ENCODE measurements at regions of chr14 and their contacts with region 1.

Region 1: DNA sequence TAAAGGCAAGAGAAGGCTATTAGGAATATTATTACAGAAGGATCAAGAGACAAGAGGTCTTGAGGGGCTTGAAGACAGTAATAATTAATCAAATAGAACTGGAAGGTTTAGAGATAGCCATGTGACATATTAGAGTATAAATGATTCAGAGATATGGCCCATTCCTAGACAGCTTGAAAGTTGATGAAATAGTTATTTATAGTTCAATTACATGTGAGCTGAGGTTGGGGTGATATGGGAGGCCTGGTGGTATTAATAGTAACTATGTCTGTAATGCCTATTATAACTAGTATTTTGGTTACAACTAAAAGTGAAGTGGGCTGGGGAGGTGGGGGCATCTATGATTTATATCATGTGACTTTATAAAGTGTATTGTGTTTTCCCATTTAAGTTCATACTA is 14.1 kb upstream of the MIS18BP1 start:
- DNase-seq: no peak
- ATAC-seq: no peak
- H3K4me3 ChIP-seq: no peak overlapping the region
- H3K27ac ChIP-seq: no peak overlapping the region
- H3K4me1 ChIP-seq: no peaks in the 10 kb centered on the region
- H3K27me3 ChIP-seq: no peaks in the 10 kb centered on the region
- CTCF ChIP-seq: no peak

Region 2: DNA sequence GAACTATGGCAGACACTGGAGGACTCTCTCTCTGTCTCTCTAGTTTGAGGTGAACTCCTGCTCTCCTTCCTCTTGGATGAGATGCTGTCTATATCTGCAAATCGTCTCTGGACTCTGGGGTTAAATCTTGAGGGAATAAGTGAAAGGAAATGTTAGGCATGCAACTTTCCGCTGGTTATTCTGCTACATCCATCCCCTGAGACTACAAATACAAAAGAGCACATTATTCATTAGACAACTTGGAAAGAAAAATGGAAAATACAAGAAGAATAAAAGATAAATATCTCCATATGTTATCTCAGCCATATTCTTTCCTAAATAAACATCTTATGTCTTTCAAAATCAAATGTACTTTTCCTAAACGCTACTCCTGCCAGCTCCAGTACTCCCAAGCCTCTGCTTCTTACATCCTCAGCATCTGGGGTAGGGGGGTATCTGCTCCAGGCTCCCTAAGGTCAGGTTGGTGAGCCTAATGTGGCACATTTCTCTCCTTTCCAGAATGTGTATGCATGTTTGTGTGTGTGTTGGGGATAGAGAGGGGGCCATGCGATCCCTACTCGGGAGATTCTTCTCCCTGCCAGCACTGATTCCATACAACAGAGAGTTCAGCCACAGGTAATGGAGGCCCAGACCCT is 657.1 kb before region 1 on chr14:
- CTCF ChIA-PET with region 1: no interaction called
- POLR2A ChIA-PET with region 1: no interaction called
- intact Hi-C with region 1: no loop called
- DNase-seq: no peak
- ATAC-seq: no peak
- H3K4me3 ChIP-seq: no peak overlapping the region
- H3K27ac ChIP-seq: no peak overlapping the region
- H3K4me1 ChIP-seq: peaks cover 9% of the 10 kb centered on the region; the same call in 1 of the 2 replicates
- H3K27me3 ChIP-seq: no peaks in the 10 kb centered on the region
- CTCF ChIP-seq: no peak

Region 3: DNA sequence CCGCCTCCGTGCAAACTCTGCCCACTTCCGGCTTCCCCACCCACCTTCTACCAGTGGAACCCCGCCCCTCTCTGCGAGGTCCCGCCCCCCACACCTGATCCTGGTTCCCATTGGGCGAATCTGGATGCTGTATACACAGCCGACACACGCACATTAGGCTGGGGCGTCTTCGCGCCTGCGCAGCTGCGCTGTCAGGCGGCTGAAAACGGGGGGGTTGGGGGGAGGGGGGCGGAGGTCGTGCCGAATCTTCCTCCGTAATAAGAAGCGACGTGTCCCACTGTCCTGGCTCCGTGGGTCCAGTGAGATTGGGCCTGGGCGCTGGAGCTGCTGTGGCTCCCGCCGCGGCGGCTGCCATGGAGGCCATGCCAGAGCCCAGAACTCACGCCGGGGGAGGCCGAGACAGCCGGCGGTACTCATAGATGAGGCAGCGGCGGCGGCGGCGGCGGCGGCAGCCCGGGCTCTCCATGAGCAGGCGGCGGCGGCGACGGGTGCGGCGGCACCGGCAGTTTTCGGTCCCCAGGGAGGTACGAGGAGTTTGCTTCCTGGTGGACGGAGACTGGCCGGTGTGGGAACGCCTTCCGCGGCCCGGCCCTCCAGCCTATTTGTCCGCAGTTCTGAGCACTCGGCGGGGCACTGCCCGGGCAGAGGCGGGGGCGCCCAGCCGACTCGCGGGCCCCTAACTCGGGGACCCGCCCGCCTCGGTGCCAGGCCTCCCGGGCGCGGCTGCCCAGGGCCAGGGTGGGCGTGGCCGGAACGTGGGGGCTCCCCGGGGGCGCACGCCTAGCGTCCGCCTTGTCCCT is 369.8 kb before region 1 on chr14:
- CTCF ChIA-PET with region 1: interaction called, 12 read pairs
- POLR2A ChIA-PET with region 1: no interaction called
- intact Hi-C with region 1: no loop called
- DNase-seq: peak; percentile 98
- ATAC-seq: peak; percentile 93
- H3K4me3 ChIP-seq: peak overlapping the region; percentile 81
- H3K27ac ChIP-seq: peak overlapping the region; percentile 68
- H3K4me1 ChIP-seq: peaks cover 16% of the 10 kb centered on the region
- H3K27me3 ChIP-seq: no peaks in the 10 kb centered on the region
- CTCF ChIP-seq: no peak

Region 4: GRCh38 chr14:45156060-45156459 is 111.0 kb before region 1 on chr14:
- CTCF ChIA-PET with region 1: no interaction called
- POLR2A ChIA-PET with region 1: no interaction called
- intact Hi-C with region 1: loop called (anchors 5 kb)
- DNase-seq: no peak
- ATAC-seq: 0 out of 2 replicates have a peak, but pooled peaks have one; percentile 35
- H3K4me3 ChIP-seq: no peak overlapping the region
- H3K27ac ChIP-seq: no peak overlapping the region
- H3K4me1 ChIP-seq: no peaks in the 10 kb centered on the region
- H3K27me3 ChIP-seq: no peaks in the 10 kb centered on the region
- CTCF ChIP-seq: no peak

Region 5: GRCh38 chr14:45177076-45177475 is 90.0 kb before region 1 on chr14:
- CTCF ChIA-PET with region 1: no interaction called
- POLR2A ChIA-PET with region 1: no interaction called
- intact Hi-C with region 1: no loop called
- DNase-seq: peak; percentile 76
- ATAC-seq: peak; percentile 11; the same call in 1 of the 2 replicates
- H3K4me3 ChIP-seq: no peak overlapping the region
- H3K27ac ChIP-seq: 0 out of 2 replicates have a peak overlapping the region, but pooled peaks have one; percentile 11
- H3K4me1 ChIP-seq: peaks cover 19% of the 10 kb centered on the region
- H3K27me3 ChIP-seq: no peaks in the 10 kb centered on the region
- CTCF ChIP-seq: no peak

Region 6: GRCh38 chr14:45201905-45202304 is 65.2 kb before region 1 on chr14:
- CTCF ChIA-PET with region 1: no interaction called
- POLR2A ChIA-PET with region 1: no interaction called
- intact Hi-C with region 1: loop called (anchors 5 kb)
- DNase-seq: peak; percentile 13
- ATAC-seq: peak; percentile 92
- H3K4me3 ChIP-seq: no peak overlapping the region
- H3K27ac ChIP-seq: no peak overlapping the region
- H3K4me1 ChIP-seq: no peaks in the 10 kb centered on the region
- H3K27me3 ChIP-seq: no peaks in the 10 kb centered on the region
- CTCF ChIP-seq: peak; percentile 37; the same call in 1 of the 2 replicates

Measured in PC-3 (cell line).